RWPE1 (cell line): ENCODE measurements at regions of chr2 and their contacts with region 1.

Region 1: DNA sequence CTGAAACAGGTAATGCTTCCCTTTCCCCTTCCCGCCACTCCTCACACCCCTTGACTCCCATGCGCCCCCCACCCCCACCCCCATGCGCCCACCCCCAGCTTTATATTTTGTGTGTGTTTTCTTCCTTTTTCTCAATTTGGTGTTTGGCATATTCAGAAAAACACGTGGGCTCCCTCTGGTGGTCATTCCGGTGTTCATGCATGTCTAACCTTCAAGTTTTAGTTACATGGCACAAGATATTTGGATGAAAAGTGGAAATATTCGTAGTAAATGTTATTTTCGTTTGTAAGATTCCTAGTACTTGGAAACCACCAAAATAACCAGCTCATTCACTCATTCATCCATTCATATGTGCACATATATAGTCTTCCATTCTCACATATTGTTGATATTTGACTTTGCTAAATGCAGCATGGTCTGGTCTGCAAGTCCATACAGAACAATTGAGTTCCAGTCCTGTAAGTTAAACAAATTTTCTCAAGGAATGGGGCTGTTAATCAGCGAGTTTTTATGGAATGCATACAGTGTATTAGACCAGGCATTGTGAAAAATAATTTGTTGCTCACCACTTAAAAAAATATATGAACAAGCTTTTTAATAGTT is 143.6 kb upstream of the MAP3K20 start:
- DNase-seq: peak; percentile 41
- H3K27ac ChIP-seq: peak overlapping the region; percentile 47; the same call in 1 of the 2 replicates
- CTCF ChIP-seq: peak; percentile 84

Region 2: GRCh38 chr2:172704072-172704936 is 227.7 kb before region 1 on chr2:
- CTCF ChIA-PET with region 1: no interaction called
- POLR2A ChIA-PET with region 1: no interaction called
- DNase-seq: peak; percentile 20
- H3K27ac ChIP-seq: no peak overlapping the region
- CTCF ChIP-seq: no peak; the same call in 1 of the 2 replicates

Region 3: GRCh38 chr2:172806493-172806892 is 125.5 kb before region 1 on chr2:
- CTCF ChIA-PET with region 1: interaction called, 43 read pairs
- POLR2A ChIA-PET with region 1: no interaction called
- DNase-seq: peak; percentile 48
- H3K27ac ChIP-seq: no peak overlapping the region
- CTCF ChIP-seq: peak; percentile 91

Region 4: DNA sequence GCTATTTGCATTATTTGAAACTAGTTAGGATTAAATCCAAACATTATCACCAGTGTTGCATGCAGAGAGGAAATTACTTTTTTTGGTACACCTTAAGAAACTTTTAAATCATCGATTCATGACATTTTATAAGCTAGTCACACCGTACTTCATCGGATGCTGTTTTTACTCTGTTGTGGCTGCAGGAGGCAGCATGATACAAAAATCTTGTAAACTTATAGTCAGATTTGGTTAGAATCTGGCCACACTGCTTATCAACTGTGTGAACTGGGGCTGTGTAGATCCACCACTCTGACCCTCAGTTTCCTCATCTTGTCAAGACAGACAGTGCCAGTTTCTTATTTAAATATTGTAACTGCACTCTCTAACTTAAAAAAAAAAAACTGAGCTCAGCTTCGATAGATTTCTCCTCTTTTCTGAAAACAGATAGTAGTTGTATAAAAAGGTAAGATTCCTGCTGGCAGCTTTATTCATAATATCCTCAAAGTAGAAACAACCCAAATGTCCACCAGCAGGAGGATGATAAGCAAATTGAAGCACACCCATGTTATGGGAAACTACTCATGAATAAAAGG is 118.6 kb before region 1 on chr2:
- CTCF ChIA-PET with region 1: interaction called, 43 read pairs
- POLR2A ChIA-PET with region 1: no interaction called
- DNase-seq: peak; percentile 22
- H3K27ac ChIP-seq: no peak overlapping the region
- CTCF ChIP-seq: peak; percentile 33

Region 5: GRCh38 chr2:173568054-173568453 is 636.0 kb after region 1 on chr2:
- CTCF ChIA-PET with region 1: no interaction called
- POLR2A ChIA-PET with region 1: no interaction called
- DNase-seq: no peak
- H3K27ac ChIP-seq: no peak overlapping the region
- CTCF ChIP-seq: no peak